Endothelial cell of umbilical vein (primary cell): ENCODE measurements at regions of chr16 and their contacts with region 1.

Region 1: DNA sequence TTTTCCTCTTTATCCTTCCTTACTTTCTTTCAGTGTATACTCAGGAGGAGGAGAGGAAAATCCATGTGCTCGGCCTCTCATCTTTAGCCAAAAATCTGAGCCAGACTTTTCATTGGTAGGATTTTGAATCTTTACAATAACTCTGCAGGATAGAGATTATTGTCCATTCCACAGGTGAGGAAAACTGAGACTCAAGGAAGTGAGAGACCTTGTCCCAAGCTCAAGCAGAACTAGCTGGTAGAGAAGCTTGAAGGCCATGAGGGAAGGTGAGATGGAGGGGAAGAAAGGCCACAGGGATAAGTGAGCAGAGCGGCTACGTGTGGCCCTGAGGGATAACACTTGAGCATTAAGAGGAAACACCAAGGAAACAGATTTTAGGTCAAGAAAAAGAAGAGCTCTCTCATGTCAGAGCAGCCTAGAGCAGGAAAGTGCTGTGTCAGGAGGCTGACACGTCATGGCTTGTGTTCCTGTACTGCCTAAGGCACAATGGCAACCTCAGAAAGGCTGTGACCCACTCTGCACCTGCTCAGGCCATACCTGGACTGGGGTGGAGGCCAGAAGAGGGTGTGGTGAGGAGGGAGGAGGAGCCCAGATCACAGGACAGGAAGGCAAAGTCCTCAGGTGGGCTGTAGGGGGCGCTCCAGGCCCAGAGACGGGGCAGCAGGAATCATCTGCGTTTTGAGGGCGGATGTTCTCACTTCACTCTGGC is 11.9 kb downstream of the MT4 start:
- DNase-seq: peak; percentile 64
- H3K4me3 ChIP-seq: no peak overlapping the region
- H3K27ac ChIP-seq: no peak overlapping the region
- H3K4me1 ChIP-seq: no peaks in the 10 kb centered on the region
- H3K27me3 ChIP-seq: peaks cover 0 to 9% of the 10 kb centered on the region in 2 experiments
- CTCF ChIP-seq: peak; percentile 86 to 91
- POLR2A ChIP-seq: no peak

Region 2: DNA sequence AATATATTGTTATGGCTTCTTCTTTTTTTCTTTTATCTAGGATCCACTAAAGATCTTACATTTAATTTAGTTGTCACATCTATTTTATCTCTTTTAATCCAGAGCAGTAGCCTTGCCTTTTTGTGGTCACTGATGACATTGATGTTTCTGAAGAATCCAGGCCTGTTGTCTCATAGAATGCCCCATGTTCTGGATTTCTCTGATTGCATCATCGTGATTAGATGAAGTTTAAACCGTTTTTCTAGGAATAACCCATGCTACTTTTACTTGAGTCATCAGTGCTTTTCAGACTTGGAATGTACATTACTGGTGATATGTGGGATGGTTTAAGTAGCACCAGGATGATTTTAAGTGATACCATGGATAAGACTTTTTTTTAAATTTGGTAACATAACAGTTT is 595.2 kb before region 1 on chr16:
- CTCF ChIA-PET with region 1: no interaction called
- POLR2A ChIA-PET with region 1: no interaction called
- dilution Hi-C with region 1: no loop called
- intact Hi-C with region 1: no loop called
- DNase-seq: no peak
- H3K4me3 ChIP-seq: no peak overlapping the region
- H3K27ac ChIP-seq: no peak overlapping the region
- H3K4me1 ChIP-seq: no peaks in the 10 kb centered on the region
- H3K27me3 ChIP-seq: no peaks in the 10 kb centered on the region
- CTCF ChIP-seq: no peak
- POLR2A ChIP-seq: no peak

Region 3: GRCh38 chr16:56389554-56389953 is 187.2 kb before region 1 on chr16:
- CTCF ChIA-PET with region 1: no interaction called
- POLR2A ChIA-PET with region 1: no interaction called
- dilution Hi-C with region 1: no loop called
- intact Hi-C with region 1: no loop called
- DNase-seq: no peak
- H3K4me3 ChIP-seq: no peak overlapping the region
- H3K27ac ChIP-seq: no peak overlapping the region
- H3K4me1 ChIP-seq: no peaks in the 10 kb centered on the region
- H3K27me3 ChIP-seq: no peaks in the 10 kb centered on the region
- CTCF ChIP-seq: no peak
- POLR2A ChIP-seq: no peak

Region 4: DNA sequence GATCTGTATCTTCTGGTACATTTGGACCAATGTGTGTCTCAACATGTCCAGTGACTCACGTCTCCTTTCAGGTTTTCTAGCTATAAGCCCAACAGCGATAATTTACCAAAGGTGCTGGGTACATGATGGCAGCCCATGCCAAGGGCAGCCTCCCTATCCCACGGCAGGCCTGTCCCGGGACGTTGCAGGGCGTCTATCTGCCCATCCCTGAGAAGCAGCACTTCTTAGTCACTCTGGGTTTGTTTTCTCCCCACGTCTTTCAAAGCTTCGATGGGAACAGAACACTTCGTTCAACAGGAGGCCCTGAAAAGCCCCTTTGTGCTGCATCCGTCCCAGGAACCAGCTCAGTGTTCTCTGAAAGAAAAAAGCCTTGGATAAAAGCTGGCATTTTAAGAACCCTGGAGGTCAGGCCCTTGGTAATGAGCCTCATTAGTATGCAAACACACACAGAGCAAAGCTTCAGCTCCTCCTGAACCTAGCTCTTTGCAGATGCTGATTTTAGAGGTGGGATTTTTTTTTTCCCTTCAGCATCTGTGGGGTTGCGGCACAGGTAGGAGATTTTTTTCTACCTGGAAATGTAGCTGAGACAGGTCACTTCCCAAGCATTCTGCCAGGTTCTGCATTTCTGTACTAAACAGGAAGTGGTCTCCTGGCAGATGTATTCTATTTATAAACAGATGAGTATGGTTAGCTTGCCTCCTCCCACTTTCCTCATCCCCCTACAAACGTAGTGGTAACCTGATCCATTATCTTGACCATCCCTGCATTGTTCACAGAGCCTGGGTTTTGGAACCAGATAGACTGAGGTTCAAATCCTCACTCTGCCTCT is 29.4 kb before region 1 on chr16:
- CTCF ChIA-PET with region 1: interaction called, 10 read pairs
- POLR2A ChIA-PET with region 1: no interaction called
- dilution Hi-C with region 1: no loop called
- intact Hi-C with region 1: no loop called
- DNase-seq: no peak
- H3K4me3 ChIP-seq: no peak overlapping the region
- H3K27ac ChIP-seq: no peak overlapping the region
- H3K4me1 ChIP-seq: peaks cover 4% of the 10 kb centered on the region
- H3K27me3 ChIP-seq: peaks cover 7% of the 10 kb centered on the region in 2 experiments
- CTCF ChIP-seq: no peak
- POLR2A ChIP-seq: no peak

Region 5: DNA sequence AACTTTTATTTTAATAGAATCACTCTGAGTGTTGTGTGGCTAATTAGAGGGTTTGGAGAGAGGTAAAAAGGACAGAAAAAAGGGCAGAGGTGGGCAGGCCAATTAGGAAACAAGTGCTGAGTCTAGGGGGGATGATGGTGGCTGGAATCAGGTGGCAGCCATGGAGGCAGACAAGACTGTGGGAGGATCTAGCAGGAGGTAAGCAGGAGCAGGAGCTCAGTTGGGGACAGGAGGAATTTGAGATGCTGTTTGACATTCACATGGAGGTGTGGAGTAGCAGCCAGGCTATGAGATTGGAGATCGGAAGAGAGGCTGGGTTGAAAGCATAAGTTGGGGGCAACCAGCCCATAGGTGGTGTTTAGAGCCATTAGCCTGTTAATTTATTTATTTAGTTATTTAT is 15.6 kb before region 1 on chr16:
- CTCF ChIA-PET with region 1: interaction called, 12 read pairs
- POLR2A ChIA-PET with region 1: no interaction called
- dilution Hi-C with region 1: no loop called
- intact Hi-C with region 1: no loop called
- DNase-seq: no peak
- H3K4me3 ChIP-seq: no peak overlapping the region
- H3K27ac ChIP-seq: no peak overlapping the region
- H3K4me1 ChIP-seq: no peaks in the 10 kb centered on the region
- H3K27me3 ChIP-seq: peaks cover 6 to 13% of the 10 kb centered on the region in 2 experiments
- CTCF ChIP-seq: no peak
- POLR2A ChIP-seq: no peak

Region 6: DNA sequence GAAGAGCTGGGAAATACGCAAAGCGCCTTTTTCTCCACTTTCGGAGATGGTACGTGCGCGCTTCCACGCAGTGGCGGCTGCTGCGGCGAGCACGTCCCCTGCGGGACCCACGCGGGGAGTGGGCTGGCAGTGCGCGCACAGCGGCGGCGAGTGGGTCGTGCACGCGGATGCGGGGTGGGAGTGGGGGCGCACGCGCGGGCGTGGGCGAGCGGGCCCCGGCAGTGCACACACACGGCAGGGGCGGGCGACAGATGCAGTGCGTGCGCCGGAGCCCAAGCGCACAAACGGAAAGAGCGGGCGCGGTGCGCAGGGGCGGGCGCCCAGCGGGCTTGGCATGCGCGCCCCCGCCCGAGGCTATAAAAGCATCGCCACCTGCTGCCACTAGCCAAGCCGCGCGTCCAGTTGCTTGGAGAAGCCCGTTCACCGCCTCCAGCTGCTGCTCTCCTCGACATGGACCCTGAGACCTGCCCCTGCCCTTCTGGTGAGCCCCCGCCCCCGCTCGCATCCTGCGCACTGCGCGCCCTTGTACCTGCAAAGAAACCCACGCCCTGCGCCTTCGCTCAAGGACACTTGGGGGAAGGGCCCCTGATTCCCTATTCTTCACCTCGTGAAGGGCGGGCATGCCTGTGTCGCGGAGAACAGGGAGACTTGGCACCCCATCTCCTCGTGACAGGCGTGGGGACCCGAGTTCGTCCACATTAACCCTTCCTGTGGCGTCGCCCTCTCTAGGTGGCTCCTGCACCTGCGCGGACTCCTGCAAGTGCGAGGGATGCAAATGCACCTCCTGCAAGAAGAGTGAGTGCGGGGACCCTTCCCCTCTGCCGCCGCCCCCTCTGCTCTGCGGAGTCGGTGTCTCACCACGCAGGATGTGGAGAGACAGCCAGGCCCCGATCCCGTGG is 12.7 kb after region 1 on chr16 and contains the start of gene MT3:
- CTCF ChIA-PET with region 1: interaction called, 17 read pairs
- POLR2A ChIA-PET with region 1: no interaction called
- dilution Hi-C with region 1: no loop called
- intact Hi-C with region 1: no loop called
- DNase-seq: no peak
- H3K4me3 ChIP-seq: peak within 1 kb of the TSS in 2 of 3 experiments; percentile 20 to 32
- H3K27ac ChIP-seq: no peak within 1 kb of the TSS
- H3K4me1 ChIP-seq: no peaks in the 10 kb centered on the region
- H3K27me3 ChIP-seq: peaks cover 20 to 21% of the 10 kb centered on the region in 2 experiments
- CTCF ChIP-seq: no peak
- POLR2A ChIP-seq: no peak
- total RNA-seq, gene MT3: not detected in 2 replicates

Region 7: GRCh38 chr16:58494981-58495520 is 1918.3 kb after region 1 on chr16:
- CTCF ChIA-PET with region 1: no interaction called
- POLR2A ChIA-PET with region 1: no interaction called
- dilution Hi-C with region 1: no loop called
- intact Hi-C with region 1: no loop called
- DNase-seq: peak; percentile 88
- H3K4me3 ChIP-seq: no peak overlapping the region
- H3K27ac ChIP-seq: peak overlapping the region; percentile 19
- H3K4me1 ChIP-seq: no peaks in the 10 kb centered on the region
- H3K27me3 ChIP-seq: no peaks in the 10 kb centered on the region
- CTCF ChIP-seq: peak; percentile 51 to 61
- POLR2A ChIP-seq: no peak